PC-3 (cell line): ENCODE measurements at regions of chr20 and their contacts with region 1.

Region 1: GRCh38 chr20:51372176-51372803 is 170.2 kb downstream of the NFATC2 start:
- DNase-seq: peak; percentile 96
- ATAC-seq: peak; percentile 100
- H3K4me3 ChIP-seq: no peak overlapping the region
- H3K27ac ChIP-seq: no peak overlapping the region
- H3K4me1 ChIP-seq: peaks cover 14% of the 10 kb centered on the region; the same call in 1 of the 2 replicates
- H3K27me3 ChIP-seq: no peaks in the 10 kb centered on the region
- CTCF ChIP-seq: peak; percentile 99

Region 2: DNA sequence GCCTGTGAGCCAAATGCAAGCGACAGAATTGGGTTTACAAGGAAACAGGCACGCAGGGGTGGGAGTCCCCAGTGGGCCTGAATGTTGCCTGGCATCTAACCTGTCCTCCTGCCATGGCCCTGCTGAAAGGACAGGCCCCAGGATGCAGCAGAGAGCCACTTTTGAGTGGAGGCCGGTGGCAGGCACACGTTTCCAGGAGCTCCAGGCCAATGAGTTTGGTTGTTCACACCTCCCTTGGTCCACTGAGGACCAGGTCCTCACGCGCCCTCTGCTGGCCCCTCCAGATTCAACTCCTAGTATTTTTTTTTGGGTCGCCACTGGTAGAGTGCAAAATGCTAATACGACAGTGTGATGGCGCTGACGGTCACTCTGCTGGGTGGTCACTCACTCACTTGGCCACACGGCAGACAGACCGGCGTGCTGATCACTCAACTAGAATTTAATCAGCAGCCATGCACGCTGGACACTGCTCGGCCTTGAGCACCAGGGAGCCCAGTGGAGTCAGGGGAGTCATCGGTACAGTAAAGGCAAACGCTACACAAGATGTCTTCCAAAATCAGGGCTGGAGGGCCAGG is 252.0 kb after region 1 on chr20:
- CTCF ChIA-PET with region 1: no interaction called
- POLR2A ChIA-PET with region 1: no interaction called
- intact Hi-C with region 1: loop called (anchors 1 kb)
- DNase-seq: peak; percentile 94
- ATAC-seq: peak; percentile 52
- H3K4me3 ChIP-seq: no peak overlapping the region
- H3K27ac ChIP-seq: peak overlapping the region; percentile 27
- H3K4me1 ChIP-seq: peaks cover 20% of the 10 kb centered on the region
- H3K27me3 ChIP-seq: no peaks in the 10 kb centered on the region
- CTCF ChIP-seq: peak; percentile 97